Transverse colon (tissue), 4 donors: ENCODE measurements at regions of chr1 and their contacts with region 1.

Region 1: GRCh38 chr1:247487057-247487456 is 29.2 kb upstream of the OR2B11 start:
- DNase-seq: peak; percentile 14
- H3K4me3 ChIP-seq: no peak overlapping the region
- H3K27ac ChIP-seq: no peak overlapping the region
- H3K4me1 ChIP-seq: no peaks in the 10 kb centered on the region
- H3K27me3 ChIP-seq: no peaks in the 10 kb centered on the region
- CTCF ChIP-seq: peak; percentile 37 to 64 (median 51)
- EP300 ChIP-seq: no peak
- POLR2A ChIP-seq: no peak

Region 2: DNA sequence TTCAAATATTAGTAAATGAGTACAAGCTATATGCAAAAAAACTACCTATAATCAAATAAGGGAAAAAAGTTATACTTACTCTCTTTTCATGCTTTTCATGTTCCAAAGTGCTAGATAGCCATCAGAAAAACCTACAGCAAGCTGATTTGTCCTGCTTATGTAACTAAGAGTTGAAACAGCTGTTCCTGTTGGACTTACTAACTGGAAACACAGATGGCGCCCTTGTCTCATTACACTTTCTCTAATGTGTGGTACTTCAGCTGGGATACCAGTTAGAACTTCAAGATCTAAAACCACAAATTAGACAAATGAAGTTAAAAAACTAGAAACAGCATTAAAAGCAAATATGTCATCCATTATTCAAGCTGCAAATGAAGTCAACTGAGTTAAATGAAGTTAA is 579.6 kb before region 1 on chr1:
- in situ Hi-C with region 1: loop called in 1 of 4 experiments (anchors 25 kb)
- intact Hi-C with region 1: no loop called
- DNase-seq: peak; percentile 20
- H3K4me3 ChIP-seq: no peak overlapping the region
- H3K27ac ChIP-seq: no peak overlapping the region
- H3K4me1 ChIP-seq: peaks cover 0 to 14% (median 7%) of the 10 kb centered on the region in 4 donors
- H3K27me3 ChIP-seq: no peaks in the 10 kb centered on the region
- CTCF ChIP-seq: peak; percentile 34 to 44 (median 37)
- EP300 ChIP-seq: no peak
- POLR2A ChIP-seq: no peak

Region 3: GRCh38 chr1:247500865-247501264 is 13.8 kb after region 1 on chr1:
- in situ Hi-C with region 1: no loop called
- intact Hi-C with region 1: no loop called
- DNase-seq: no peak
- H3K4me3 ChIP-seq: no peak overlapping the region
- H3K27ac ChIP-seq: no peak overlapping the region
- H3K4me1 ChIP-seq: no peaks in the 10 kb centered on the region
- H3K27me3 ChIP-seq: no peaks in the 10 kb centered on the region
- CTCF ChIP-seq: no peak
- EP300 ChIP-seq: no peak
- POLR2A ChIP-seq: no peak

Region 4: GRCh38 chr1:247605286-247605685 is 118.2 kb after region 1 on chr1 and contains the start of gene OR2G3:
- in situ Hi-C with region 1: no loop called
- intact Hi-C with region 1: no loop called
- DNase-seq: no peak
- H3K4me3 ChIP-seq: no peak within 1 kb of the TSS
- H3K27ac ChIP-seq: no peak within 1 kb of the TSS
- H3K4me1 ChIP-seq: no peaks in the 10 kb centered on the region
- H3K27me3 ChIP-seq: no peaks in the 10 kb centered on the region
- CTCF ChIP-seq: no peak
- EP300 ChIP-seq: no peak
- POLR2A ChIP-seq: no peak
- total RNA-seq, gene OR2G3: not detected